ENCODE measurements at regions of chr14 and their contacts with region 1.

Region 1: GRCh38 chr14:70907176-70907995 is at the start of gene PCNX1:
- DNase-seq: peak; percentile 87
- H3K4me3 Mint-ChIP-seq: peak within 1 kb of the TSS; percentile 81
- H3K27ac Mint-ChIP-seq: peak within 1 kb of the TSS; percentile 91
- H3K4me1 Mint-ChIP-seq: peaks cover 74% of the 10 kb centered on the region
- H3K27me3 Mint-ChIP-seq: no peaks in the 10 kb centered on the region
- total RNA-seq, gene PCNX1: 51.9 to 63.1 TPM

Region 2: DNA sequence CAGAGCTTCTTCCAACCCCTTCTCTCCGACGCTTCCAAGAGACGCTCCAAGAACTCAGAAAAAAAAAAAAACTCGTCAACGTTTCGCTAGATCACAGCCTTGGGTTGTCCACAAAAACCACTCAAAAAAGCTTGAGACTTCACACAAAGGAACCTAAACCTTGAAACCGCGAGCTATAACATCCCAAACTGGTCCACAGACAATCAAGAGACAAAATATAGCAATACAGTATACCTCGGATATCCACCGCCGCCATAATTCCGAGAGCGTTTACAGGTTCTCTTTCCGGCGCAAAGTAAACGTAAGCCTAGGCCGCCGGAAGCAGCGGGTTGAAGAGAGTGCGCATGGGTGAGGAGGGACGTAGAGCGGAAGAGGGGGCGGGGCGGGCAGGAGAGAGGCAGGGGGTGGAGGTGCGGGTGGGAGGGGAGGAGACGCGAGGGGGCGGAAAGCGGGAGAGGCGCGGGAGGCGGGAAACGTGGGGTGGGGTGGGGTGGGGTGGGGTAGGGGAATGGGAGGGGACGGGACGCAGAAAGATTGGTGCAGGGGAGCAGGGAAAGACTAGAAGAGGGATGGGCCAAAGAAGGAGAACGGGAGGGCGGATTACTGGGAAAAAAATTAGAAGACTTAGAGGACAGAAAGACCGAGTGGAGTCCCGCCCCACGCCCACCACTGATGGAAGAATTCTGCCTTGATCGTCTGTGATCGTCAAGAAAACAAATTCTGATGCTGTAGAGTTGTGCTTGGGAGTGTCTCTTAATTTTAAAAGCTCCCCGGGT is 306.8 kb before region 1 on chr14 and contains the start of gene MED6:
- CTCF ChIA-PET with region 1: no interaction called
- intact Hi-C with region 1: loop called (anchors 5 kb)
- DNase-seq: peak; percentile 96
- H3K4me3 Mint-ChIP-seq: peak within 1 kb of the TSS; percentile 98
- H3K27ac Mint-ChIP-seq: peak within 1 kb of the TSS; percentile 93
- H3K4me1 Mint-ChIP-seq: peaks cover 23% of the 10 kb centered on the region
- H3K27me3 Mint-ChIP-seq: peaks cover 2% of the 10 kb centered on the region
- total RNA-seq, gene MED6: 48.5 to 48.9 TPM

Region 3: GRCh38 chr14:70816525-70816924 is 90.9 kb before region 1 on chr14:
- CTCF ChIA-PET with region 1: interaction called, 44 read pairs
- intact Hi-C with region 1: loop called (anchors 2 kb)
- DNase-seq: no peak
- H3K4me3 Mint-ChIP-seq: no peak overlapping the region
- H3K27ac Mint-ChIP-seq: no peak overlapping the region
- H3K4me1 Mint-ChIP-seq: peaks cover 15% of the 10 kb centered on the region
- H3K27me3 Mint-ChIP-seq: peaks cover 16% of the 10 kb centered on the region

Region 4: DNA sequence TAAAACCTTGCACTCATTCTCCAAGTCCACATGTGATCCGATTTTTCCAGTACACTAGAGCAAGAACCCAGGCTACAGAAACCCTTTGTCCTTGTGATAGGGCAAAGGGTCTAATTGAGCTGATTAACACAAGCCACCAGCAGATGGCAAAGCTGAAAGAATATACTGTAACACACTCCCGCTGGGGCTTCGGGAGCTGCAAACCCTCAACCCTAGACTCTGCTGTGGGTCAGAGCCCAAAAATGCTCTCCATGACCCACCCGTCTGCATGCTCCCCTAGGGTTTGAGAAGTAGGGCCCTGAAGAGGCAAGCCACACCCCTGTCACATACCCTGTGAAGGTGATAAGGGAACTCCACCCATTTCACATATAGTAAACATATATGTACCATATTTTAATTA is 33.8 kb before region 1 on chr14:
- CTCF ChIA-PET with region 1: interaction called, 84 read pairs
- intact Hi-C with region 1: loop called (anchors 5 kb)
- DNase-seq: peak; percentile 32
- H3K4me3 Mint-ChIP-seq: no peak overlapping the region
- H3K27ac Mint-ChIP-seq: no peak overlapping the region
- H3K4me1 Mint-ChIP-seq: peaks cover 20% of the 10 kb centered on the region
- H3K27me3 Mint-ChIP-seq: no peaks in the 10 kb centered on the region

Region 5: GRCh38 chr14:70934502-70935134 is 27.2 kb after region 1 on chr14:
- CTCF ChIA-PET with region 1: interaction called, 15 read pairs
- intact Hi-C with region 1: loop called (anchors 1 kb)
- DNase-seq: peak; percentile 37
- H3K4me3 Mint-ChIP-seq: peak overlapping the region; percentile 56
- H3K27ac Mint-ChIP-seq: peak overlapping the region; percentile 84
- H3K4me1 Mint-ChIP-seq: peaks cover 72% of the 10 kb centered on the region
- H3K27me3 Mint-ChIP-seq: no peaks in the 10 kb centered on the region

Region 6: DNA sequence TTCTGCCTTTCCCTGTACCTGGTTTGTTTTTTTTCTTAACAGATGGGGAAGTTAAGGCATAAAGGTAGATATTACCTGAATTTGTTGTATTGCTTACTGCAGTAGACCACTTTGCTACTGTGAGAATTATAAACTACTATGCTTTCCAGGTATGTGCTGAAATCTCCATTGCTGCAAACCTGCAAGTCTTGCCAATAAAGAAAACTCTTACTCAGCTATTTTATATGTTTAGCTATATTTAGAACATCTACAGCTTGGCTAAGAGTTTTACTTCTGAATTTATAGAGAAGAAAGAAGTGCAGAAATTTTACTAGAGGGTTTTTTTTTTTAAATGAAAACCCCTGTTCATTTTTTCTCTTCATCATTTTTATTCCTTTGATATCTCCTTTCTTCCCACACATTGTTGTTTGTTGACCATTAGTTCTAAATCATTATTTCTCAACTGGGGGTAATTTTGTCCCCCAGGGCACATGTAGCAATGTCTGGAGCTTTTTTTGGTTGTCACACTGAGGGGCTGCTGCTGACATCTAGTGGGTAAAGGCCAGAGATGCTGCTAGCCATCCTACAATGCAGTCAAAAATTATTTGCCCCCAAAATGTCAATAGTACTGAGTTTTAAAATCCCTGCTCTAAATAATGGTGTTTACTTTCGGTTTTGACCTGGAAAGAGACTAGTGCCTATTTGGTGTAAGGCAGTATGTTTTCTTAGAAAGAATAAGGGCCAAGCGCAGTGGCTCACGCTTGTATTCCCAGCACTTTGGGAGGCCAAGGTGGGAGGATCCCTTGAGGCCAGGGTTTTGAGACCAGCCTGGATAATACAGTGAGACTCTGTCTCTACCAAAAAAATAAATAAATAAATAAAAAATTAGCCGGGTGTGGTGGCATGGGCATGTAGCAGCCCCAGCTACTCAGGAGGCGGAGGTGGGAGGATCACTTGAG is 48.4 kb after region 1 on chr14:
- CTCF ChIA-PET with region 1: interaction called, 55 read pairs
- intact Hi-C with region 1: loop called (anchors 1 kb)
- DNase-seq: peak; percentile 58
- H3K4me3 Mint-ChIP-seq: no peak overlapping the region
- H3K27ac Mint-ChIP-seq: no peak overlapping the region
- H3K4me1 Mint-ChIP-seq: peaks cover 33% of the 10 kb centered on the region
- H3K27me3 Mint-ChIP-seq: no peaks in the 10 kb centered on the region